ENCODE measurements at regions of chr12 and their contacts with region 1.

Region 1: DNA sequence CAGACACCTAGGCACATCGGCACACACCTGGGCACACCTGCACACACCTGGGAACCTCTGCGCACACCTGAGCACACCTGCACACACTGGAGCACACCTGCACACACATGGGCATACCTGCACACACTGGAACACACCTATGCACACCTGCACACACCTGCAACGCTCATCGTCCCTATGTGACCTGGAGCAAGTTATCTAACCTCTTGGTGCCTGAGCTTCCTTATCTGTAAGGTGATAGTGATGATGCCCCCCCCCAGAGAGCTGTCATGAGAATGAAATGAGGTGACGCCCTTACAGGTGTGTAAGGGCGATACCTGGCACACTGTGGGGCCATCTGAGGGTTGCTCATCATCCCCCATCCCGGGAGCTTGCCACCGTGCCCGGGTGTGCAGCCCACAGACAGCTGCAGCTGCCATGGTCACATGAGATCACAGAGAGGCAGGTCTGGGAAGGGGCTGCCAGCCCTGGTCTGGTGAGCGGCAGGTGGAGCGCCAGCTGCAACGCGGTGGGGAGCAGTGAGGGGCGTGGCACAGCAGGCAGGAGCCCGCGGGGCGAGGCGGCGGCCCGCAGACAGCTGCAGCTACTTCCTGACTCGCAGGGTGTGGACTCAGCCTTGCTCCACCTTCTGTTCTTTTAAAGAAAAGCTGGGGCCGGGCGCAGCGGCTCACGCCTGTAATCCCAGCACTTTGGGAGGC is 59.9 kb upstream of the FBRSL1 start:
- DNase-seq: no peak
- ATAC-seq: peak; percentile 57
- H3K4me3 ChIP-seq: no peak overlapping the region
- H3K27ac ChIP-seq: no peak overlapping the region
- H3K4me1 ChIP-seq: peaks cover 17% of the 10 kb centered on the region
- H3K27me3 ChIP-seq: peaks cover 29% of the 10 kb centered on the region
- CTCF ChIP-seq: no peak

Region 2: DNA sequence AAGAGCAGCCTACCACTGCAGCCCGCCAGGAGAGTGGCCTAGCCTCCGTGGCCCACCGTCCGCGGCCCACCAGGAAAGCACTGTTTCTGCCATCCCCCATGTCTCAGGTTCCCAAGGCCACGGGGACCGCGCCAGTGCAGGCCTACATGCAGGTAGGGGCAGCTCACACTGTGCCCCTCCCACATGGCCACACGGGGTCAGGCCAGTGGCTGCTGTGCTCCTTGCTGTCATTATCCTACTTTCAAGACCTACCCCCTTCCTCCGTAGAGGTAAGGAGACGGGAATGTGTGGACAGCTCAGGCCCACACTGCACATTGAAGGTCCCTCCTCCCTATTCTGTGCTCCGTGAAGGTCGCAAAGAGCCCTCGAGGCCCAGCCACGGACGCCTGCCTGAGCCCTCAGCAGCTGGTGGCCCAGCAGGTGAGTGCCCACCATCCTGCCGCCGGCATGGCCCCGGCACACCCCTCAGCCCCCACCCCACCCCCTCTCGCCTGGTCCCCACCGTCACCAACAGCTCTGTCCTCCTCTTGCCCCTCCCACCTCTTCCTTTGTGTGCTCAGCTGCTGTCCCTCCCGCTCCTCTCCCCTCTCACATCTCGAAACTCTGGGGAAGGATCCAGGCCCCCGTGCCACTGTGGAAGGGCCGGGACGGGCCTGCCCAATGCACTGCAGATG is 296.0 kb before region 1 on chr12:
- intact Hi-C with region 1: no loop called
- DNase-seq: peak; percentile 49
- ATAC-seq: peak; percentile 19
- H3K4me3 ChIP-seq: no peak overlapping the region
- H3K27ac ChIP-seq: no peak overlapping the region
- H3K4me1 ChIP-seq: no peaks in the 10 kb centered on the region
- H3K27me3 ChIP-seq: no peaks in the 10 kb centered on the region
- CTCF ChIP-seq: no peak

Region 3: GRCh38 chr12:132614861-132615578 is 184.9 kb after region 1 on chr12:
- intact Hi-C with region 1: loop called (anchors 10 kb)
- DNase-seq: peak; percentile 86
- ATAC-seq: peak; percentile 88
- H3K4me3 ChIP-seq: no peak overlapping the region
- H3K27ac ChIP-seq: no peak overlapping the region
- H3K4me1 ChIP-seq: peaks cover 5% of the 10 kb centered on the region
- H3K27me3 ChIP-seq: peaks cover 33% of the 10 kb centered on the region
- CTCF ChIP-seq: peak; percentile 92

Measured in upper lobe of right lung (tissue), 1 donor.